ENCODE measurements at regions of chr6 and their contacts with region 1.

Region 1: DNA sequence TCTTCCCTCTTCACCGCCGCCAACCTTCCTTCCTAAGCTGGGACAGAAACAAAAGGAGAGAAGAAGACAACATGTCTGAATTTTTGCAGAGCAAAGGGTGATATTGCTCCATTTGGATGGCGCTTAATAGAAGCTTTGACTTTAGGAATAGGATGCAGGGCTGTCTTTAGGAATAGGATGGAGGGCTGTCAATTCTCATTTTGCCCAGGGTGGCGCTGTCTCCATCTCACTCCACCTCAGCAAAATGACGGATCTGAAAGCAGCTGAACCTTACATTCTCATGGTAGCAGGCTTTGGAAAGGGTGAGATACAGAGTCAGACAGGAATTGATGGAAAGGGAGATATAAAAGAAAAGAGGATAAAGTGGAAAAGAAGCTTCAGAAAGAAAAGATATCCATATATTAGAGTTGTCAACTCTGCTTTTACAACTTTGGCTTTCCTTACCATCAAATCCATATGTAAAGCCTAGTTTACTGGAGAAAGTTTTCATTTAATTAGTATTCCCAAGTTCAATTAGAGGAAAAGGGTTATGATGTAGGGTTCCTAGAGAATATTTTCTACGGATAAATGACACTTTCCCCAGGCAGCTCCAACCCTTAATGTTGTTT is 2.4 kb downstream of the MTCL3 start:
- DNase-seq: peak; percentile 71
- H3K4me3 ChIP-seq: peak overlapping the region; percentile 68 to 78
- H3K27ac ChIP-seq: peak overlapping the region; percentile 11 to 85; a peak in 3 of 4 replicates
- H3K4me1 ChIP-seq: peaks cover 4 to 17% of the 10 kb centered on the region in 2 experiments; a peak in 3 of 4 replicates
- H3K27me3 ChIP-seq: no peaks in the 10 kb centered on the region
- CTCF ChIP-seq: peak; percentile 84
- EP300 ChIP-seq: no peak
- RAD21 ChIP-seq: 0 out of 2 replicates have a peak, but pooled peaks have one; percentile 23

Region 2: DNA sequence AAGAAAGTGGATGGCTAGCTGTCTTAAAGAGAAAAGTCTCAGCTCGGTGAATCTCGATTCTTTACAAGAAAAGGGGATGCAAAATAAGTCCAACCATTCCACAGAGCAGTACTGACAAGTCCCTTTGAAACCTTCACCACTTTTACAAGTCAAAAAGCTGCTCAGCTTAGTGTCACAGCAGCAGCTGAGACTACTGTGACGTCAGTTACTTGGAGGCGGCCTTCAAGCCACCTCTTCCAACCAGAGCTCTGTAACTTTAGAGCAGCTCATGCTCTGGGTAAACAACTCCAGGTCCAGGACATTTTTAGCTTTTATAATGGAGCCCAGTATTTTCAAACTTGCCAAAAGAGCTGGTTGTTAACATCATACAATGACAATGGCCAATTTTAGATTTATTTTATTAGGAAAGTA is 57.5 kb before region 1 on chr6 and contains the start of gene KIAA0408:
- CTCF ChIA-PET with region 1: interaction called, 22 read pairs
- POLR2A ChIA-PET with region 1: interaction called, 3 read pairs
- DNase-seq: no peak
- H3K4me3 ChIP-seq: no peak within 1 kb of the TSS
- H3K27ac ChIP-seq: no peak within 1 kb of the TSS
- H3K4me1 ChIP-seq: peaks cover 0 to 3% of the 10 kb centered on the region in 2 experiments; a peak in 1 of 4 replicates
- H3K27me3 ChIP-seq: no peaks in the 10 kb centered on the region
- CTCF ChIP-seq: no peak
- EP300 ChIP-seq: no peak
- RAD21 ChIP-seq: no peak
- polyA plus RNA-seq, gene KIAA0408: 4.0 and 5.9 TPM in 2 replicates

Region 3: GRCh38 chr6:127471379-127472255 is 45.2 kb before region 1 on chr6:
- CTCF ChIA-PET with region 1: interaction called, 18 read pairs
- POLR2A ChIA-PET with region 1: interaction called, 9 read pairs
- DNase-seq: no peak
- H3K4me3 ChIP-seq: no peak overlapping the region
- H3K27ac ChIP-seq: no peak overlapping the region
- H3K4me1 ChIP-seq: no peaks in the 10 kb centered on the region
- H3K27me3 ChIP-seq: no peaks in the 10 kb centered on the region
- CTCF ChIP-seq: no peak
- EP300 ChIP-seq: no peak
- RAD21 ChIP-seq: no peak

Region 4: GRCh38 chr6:127496471-127496870 is 20.3 kb before region 1 on chr6:
- CTCF ChIA-PET with region 1: interaction called, 163 read pairs
- POLR2A ChIA-PET with region 1: interaction called, 3 read pairs
- DNase-seq: no peak
- H3K4me3 ChIP-seq: no peak overlapping the region
- H3K27ac ChIP-seq: no peak overlapping the region
- H3K4me1 ChIP-seq: no peaks in the 10 kb centered on the region
- H3K27me3 ChIP-seq: no peaks in the 10 kb centered on the region
- CTCF ChIP-seq: peak; percentile 35; the same call in 1 of the 2 replicates
- EP300 ChIP-seq: no peak
- RAD21 ChIP-seq: no peak

Region 5: DNA sequence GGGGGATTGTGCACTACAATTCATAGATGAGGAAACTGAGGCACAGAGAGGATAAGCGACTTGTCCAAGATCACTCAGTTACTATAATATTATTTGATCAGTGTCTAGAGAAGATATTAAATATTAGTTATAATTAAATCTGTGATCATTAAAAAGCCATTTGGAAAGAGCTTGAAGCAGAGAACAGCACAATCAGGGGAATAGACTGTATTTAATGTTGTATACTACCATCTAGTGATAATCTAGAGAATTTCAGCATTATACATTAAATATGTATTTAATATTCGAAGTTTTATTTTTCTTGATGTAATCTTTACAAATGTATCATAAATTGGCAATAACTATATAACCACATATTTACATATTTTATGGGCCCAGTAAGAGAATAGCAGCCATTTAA is 22.5 kb after region 1 on chr6:
- CTCF ChIA-PET with region 1: interaction called, 77 read pairs
- POLR2A ChIA-PET with region 1: interaction called, 8 read pairs
- DNase-seq: peak; percentile 47
- H3K4me3 ChIP-seq: no peak overlapping the region
- H3K27ac ChIP-seq: no peak overlapping the region
- H3K4me1 ChIP-seq: peaks cover 0 to 4% of the 10 kb centered on the region in 2 experiments; a peak in 1 of 4 replicates
- H3K27me3 ChIP-seq: no peaks in the 10 kb centered on the region
- CTCF ChIP-seq: peak; percentile 70
- EP300 ChIP-seq: no peak
- RAD21 ChIP-seq: peak; percentile 73

Region 6: DNA sequence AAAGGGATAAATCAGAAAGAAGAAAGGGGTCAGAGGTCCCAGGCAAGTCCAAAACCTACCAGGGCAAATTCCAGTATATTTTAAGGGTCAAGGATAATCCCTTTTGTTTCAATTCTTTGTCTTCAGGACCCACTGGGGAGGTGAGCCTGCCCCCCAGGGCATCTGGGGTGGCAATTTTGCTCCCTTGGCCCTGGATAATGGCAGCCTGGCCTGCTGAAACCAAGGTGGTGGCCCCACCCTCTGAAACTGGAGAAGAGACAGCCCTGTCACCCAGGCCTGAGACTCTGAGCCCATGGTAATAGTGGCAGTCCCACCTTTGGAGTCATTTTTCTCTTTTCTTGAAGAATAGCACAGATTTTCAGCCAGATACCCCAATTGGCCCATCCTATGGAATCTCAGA is 178.3 kb after region 1 on chr6:
- CTCF ChIA-PET with region 1: no interaction called
- POLR2A ChIA-PET with region 1: no interaction called
- DNase-seq: no peak
- H3K4me3 ChIP-seq: no peak overlapping the region
- H3K27ac ChIP-seq: no peak overlapping the region
- H3K4me1 ChIP-seq: no peaks in the 10 kb centered on the region
- H3K27me3 ChIP-seq: no peaks in the 10 kb centered on the region
- CTCF ChIP-seq: no peak
- EP300 ChIP-seq: no peak
- RAD21 ChIP-seq: no peak

Measured in SK-N-SH (cell line).